ENCODE measurements at regions of chr11 and their contacts with region 1.

Region 1: GRCh38 chr11:57249384-57250319 is 12.6 kb upstream of the APLNR start:
- DNase-seq: no peak
- H3K4me3 ChIP-seq: no peak overlapping the region
- H3K27me3 ChIP-seq: peaks cover 2% of the 10 kb centered on the region; the same call in 1 of the 2 replicates
- CTCF ChIP-seq: peak; percentile 87

Region 2: GRCh38 chr11:57001674-57002401 is 247.8 kb before region 1 on chr11:
- CTCF ChIA-PET with region 1: interaction called, 44 read pairs
- POLR2A ChIA-PET with region 1: interaction called, 3 read pairs
- DNase-seq: no peak
- H3K4me3 ChIP-seq: no peak overlapping the region
- H3K27me3 ChIP-seq: no peaks in the 10 kb centered on the region; the same call in 1 of the 2 replicates
- CTCF ChIP-seq: peak; percentile 48

Region 3: GRCh38 chr11:57116654-57117053 is 133.0 kb before region 1 on chr11:
- CTCF ChIA-PET with region 1: interaction called, 42 read pairs
- POLR2A ChIA-PET with region 1: no interaction called
- DNase-seq: no peak
- H3K4me3 ChIP-seq: no peak overlapping the region
- H3K27me3 ChIP-seq: no peaks in the 10 kb centered on the region
- CTCF ChIP-seq: peak; percentile 37

Region 4: GRCh38 chr11:57182896-57183295 is 66.8 kb before region 1 on chr11:
- CTCF ChIA-PET with region 1: interaction called, 10 read pairs
- POLR2A ChIA-PET with region 1: no interaction called
- DNase-seq: no peak
- H3K4me3 ChIP-seq: no peak overlapping the region
- H3K27me3 ChIP-seq: peaks cover 6% of the 10 kb centered on the region; the same call in 1 of the 2 replicates
- CTCF ChIP-seq: no peak

Region 5: GRCh38 chr11:57213342-57214095 is 36.1 kb before region 1 on chr11:
- CTCF ChIA-PET with region 1: interaction called, 12 read pairs
- POLR2A ChIA-PET with region 1: no interaction called
- DNase-seq: no peak
- H3K4me3 ChIP-seq: no peak overlapping the region
- H3K27me3 ChIP-seq: no peaks in the 10 kb centered on the region
- CTCF ChIP-seq: no peak

Region 6: GRCh38 chr11:57237204-57237681 is 12.4 kb before region 1 on chr11 and contains the start of gene APLNR:
- CTCF ChIA-PET with region 1: interaction called, 64 read pairs
- POLR2A ChIA-PET with region 1: no interaction called
- DNase-seq: no peak
- H3K4me3 ChIP-seq: no peak within 1 kb of the TSS
- H3K27me3 ChIP-seq: peaks cover 14% of the 10 kb centered on the region
- CTCF ChIP-seq: no peak
- polyA plus RNA-seq, gene APLNR: not detected in 2 replicates

Region 7: DNA sequence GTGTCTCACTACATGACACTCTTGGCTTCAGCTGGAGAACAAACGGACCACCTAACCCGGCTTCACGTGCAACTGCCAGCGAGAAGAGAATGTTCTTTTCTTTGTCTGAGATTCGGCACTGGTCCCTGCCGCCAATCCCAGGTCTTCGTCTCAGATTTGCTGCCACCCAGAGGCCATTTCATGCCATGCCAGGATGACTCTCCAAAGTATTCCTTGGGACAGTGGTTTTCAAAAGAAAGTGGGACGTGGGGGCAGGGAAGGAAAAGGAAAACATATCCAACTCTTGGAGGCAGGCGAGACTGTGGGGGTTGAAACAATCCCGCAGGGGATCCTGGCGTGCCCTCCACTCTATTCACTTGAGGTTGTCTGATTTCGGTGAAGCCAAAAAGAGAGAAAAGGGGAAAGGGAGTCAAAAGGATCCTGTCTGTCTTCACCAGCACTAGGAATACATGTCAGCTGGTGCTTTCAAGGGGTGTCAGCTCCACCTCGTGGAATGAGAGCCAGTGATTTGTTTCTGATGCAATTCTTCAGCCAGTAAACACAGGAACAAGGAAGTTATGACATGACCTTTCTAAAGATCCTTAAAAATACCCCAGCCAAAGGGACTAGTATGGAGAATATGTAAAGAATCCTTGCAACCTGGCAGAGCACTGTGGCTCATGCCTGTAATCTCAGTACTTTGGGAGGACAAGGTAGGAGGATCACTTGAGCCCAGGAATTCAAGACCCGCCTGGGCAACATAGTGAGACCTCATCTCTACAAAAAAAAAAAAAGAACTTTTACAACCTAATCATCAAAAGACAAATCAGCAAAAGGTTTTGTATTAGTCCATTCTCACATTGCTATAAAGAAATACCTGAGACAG is 28.4 kb after region 1 on chr11:
- CTCF ChIA-PET with region 1: interaction called, 48 read pairs
- POLR2A ChIA-PET with region 1: no interaction called
- DNase-seq: no peak
- H3K4me3 ChIP-seq: no peak overlapping the region
- H3K27me3 ChIP-seq: no peaks in the 10 kb centered on the region
- CTCF ChIP-seq: peak; percentile 88

Region 8: DNA sequence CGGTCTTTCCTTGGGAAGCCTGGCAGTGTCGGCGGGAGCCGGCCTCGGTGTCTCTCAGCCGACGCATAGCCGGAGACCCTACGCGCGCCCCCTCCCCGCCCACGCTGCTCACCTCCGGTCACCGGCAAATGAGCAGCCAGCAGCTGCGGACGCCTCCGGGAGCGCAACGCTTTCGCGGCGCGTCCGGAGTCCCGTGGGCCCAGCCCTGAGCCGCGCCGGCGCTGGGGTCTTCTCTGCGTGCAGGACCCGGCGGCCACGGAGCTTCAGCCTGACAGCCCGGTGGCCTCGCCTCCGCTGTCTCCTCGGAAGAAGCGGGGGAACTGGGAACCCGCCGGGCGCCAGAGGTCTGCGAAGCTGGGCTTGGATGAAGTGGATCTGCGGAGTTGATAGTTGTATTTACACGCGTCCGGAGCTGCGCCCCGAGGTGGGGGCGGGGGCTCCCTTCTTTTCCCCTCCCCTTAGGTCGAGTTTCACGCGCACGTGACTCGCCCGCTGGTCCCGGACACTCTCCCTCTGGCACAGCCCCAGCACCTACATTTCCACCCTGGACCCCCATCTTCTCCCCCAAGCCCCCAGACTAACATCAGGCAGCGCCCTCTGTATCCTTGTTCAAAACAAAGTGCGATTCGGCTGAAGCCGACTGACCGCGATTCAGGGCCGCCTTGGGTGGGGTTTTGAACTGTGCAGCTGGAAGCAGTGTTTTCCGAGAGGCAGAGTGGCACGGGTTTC is 265.8 kb after region 1 on chr11 and contains the start of gene SLC43A1:
- CTCF ChIA-PET with region 1: no interaction called
- POLR2A ChIA-PET with region 1: no interaction called
- DNase-seq: no peak
- H3K4me3 ChIP-seq: peak within 1 kb of the TSS; percentile 79
- H3K27me3 ChIP-seq: no peaks in the 10 kb centered on the region
- CTCF ChIP-seq: no peak; the same call in 1 of the 2 replicates
- polyA plus RNA-seq, gene SLC43A1: 11.8 and 23.4 TPM in 2 replicates

Region 9: DNA sequence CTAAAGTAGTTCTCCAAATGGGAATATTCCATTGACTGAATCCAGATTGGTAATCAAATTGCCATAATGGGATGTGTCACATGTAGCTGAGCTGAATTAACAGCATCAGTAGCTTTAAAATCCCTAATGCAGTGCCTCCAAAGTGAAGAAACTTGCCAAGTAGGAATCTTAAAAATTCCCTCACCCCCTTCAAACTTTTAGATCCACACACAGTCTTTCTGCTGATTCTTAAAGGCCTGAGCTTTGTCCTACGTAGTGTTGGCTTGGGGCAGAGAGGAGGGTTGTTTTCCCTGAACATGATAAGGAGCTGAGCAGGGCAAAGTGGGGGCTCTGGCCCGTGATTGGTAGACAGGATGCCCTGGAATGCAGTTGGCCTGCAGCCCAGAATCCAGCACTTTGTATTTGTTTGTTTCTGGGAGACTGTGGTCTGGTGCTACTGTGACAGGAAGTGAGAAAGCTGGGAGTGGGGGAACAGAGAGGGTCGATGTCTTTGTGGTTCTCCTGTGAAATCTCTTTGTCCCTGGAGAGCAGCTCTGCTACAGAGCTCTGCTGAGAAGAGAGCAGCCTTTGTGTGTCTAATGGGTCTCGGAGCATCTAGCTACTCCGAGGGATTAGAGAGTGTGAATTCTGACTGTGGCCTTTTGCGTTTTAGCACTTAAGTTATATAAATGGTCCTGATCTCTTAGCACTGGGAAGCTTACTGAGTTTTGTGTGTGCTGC is 528.8 kb after region 1 on chr11:
- CTCF ChIA-PET with region 1: no interaction called
- POLR2A ChIA-PET with region 1: no interaction called
- DNase-seq: peak; percentile 87
- H3K4me3 ChIP-seq: no peak overlapping the region
- H3K27me3 ChIP-seq: no peaks in the 10 kb centered on the region
- CTCF ChIP-seq: no peak